ENCODE measurements at regions of chr7 and their contacts with region 1.

Region 1: GRCh38 chr7:117385340-117386109 is 41.8 kb downstream of the ASZ1 start:
- DNase-seq: no peak
- H3K4me3 ChIP-seq: no peak overlapping the region
- CTCF ChIP-seq: no peak
- POLR2A ChIP-seq: no peak

Region 2: DNA sequence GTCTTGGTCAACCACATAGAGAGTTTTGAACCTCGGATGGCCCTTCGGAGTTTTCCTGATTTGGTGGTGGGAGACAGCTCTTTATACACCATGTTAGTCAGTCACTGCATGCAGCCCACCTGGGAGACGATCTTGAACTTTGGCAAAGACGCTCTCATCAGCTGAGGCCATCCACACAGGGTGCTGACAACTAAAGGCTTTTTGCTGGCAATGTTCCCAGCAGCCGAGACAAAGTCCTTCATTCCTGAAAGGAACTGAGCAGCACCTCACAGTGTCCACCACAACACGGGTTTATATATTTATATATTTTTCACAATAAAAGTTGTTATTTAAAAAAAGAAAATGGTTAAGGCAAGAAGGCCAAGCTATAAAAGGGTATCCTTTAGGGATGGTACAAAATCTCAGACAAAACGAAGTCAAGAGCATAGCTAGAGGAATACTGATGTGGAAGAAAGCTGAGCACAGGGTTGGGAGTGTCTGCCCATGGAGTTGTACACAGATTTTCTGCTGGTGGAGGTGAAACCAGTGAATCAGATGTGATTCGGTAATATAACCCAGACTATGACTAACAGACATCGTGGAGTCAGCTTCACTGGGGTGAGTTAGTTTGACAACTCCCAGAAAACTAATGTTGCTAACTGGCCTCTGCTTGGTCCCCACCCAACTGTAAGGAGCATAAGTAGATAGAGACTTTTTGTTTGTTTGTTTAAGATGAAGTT is 550.6 kb before region 1 on chr7:
- intact Hi-C with region 1: no loop called
- DNase-seq: no peak
- H3K4me3 ChIP-seq: no peak overlapping the region
- CTCF ChIP-seq: no peak
- POLR2A ChIP-seq: no peak

Region 3: DNA sequence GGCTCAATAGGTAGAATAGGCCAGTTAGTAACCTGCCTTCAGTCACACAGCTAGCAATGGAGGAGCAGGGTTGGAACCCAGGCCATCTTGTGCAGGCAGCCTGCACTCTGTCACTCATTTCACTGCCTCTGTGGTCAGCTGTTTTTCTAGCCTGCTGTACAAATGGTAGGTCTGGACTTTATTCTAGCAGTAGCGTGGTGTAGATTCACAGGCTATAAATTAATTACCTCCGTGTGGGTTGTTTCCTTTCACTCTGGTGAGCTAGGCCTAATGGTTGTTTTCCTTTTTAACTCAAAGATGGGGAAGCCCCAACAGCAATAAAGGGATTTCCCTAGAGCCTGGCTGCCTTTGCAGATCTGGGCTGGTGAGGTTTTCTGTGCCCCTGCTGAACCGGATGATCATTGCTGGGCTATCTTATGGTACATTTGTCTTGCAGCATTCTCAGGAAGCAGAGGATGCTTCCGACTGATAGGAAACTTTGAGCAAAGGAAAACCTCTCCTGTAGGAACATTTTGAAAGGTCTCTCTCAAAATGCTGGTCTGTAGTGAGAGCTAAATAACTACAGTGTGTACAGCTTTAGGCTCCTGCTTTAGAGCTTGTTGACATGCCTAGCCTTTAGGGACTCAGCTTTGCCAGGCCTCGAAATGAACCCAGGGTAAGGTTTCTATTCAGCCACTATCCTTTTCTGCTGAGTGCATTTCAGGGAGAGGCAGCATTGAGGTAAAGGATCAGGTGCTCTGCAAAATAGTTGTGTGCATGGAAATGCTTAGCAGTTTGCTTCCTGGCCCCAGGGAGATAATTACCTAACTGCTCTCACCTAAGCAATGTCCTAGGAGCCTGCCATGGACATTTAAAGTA is 274.8 kb before region 1 on chr7:
- intact Hi-C with region 1: no loop called
- DNase-seq: no peak
- H3K4me3 ChIP-seq: no peak overlapping the region
- CTCF ChIP-seq: no peak
- POLR2A ChIP-seq: no peak

Region 4: DNA sequence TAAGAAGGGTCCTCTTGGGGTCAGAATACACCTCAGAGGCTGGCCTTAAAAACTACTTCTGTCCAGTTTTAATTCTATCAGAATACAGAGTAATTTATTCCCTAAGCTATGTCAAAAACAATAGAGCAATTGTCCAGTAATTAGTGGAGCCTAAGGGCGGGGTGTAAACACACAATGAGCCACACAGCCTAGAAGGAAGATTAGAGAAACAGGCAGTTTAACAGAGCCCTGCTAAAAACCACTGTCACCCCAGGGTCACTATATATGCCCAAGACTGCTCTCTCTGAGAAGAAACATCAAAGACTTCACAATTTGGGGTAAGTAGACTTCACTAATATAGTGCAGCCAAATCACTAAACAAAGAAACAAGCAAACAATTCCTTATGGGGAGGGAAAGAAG is 35.5 kb before region 1 on chr7:
- intact Hi-C with region 1: no loop called
- DNase-seq: no peak
- H3K4me3 ChIP-seq: no peak overlapping the region
- CTCF ChIP-seq: no peak
- POLR2A ChIP-seq: no peak

Region 5: DNA sequence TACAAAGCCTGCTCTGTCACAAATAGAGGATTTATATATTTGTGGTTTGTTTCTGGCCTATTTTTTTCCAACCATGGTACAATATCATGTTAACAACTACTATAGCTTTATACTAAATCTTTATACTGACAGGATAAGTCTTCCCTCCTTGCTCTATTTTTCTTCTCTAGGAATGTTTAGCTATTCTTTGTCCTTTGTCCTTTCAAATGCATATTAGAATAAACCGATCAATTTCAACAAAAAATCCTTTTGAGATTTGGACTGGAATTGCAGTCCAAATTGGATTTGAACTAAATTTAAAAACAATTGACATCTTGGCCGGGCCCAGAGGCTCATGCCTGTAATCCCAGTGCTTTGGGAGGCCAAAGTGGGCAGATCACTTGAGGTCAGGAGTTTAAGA is 526.9 kb after region 1 on chr7:
- intact Hi-C with region 1: loop called (anchors 5 kb)
- DNase-seq: no peak
- H3K4me3 ChIP-seq: no peak overlapping the region
- CTCF ChIP-seq: no peak
- POLR2A ChIP-seq: no peak